ENCODE measurements at regions of chr1 and their contacts with region 1.

Region 1: DNA sequence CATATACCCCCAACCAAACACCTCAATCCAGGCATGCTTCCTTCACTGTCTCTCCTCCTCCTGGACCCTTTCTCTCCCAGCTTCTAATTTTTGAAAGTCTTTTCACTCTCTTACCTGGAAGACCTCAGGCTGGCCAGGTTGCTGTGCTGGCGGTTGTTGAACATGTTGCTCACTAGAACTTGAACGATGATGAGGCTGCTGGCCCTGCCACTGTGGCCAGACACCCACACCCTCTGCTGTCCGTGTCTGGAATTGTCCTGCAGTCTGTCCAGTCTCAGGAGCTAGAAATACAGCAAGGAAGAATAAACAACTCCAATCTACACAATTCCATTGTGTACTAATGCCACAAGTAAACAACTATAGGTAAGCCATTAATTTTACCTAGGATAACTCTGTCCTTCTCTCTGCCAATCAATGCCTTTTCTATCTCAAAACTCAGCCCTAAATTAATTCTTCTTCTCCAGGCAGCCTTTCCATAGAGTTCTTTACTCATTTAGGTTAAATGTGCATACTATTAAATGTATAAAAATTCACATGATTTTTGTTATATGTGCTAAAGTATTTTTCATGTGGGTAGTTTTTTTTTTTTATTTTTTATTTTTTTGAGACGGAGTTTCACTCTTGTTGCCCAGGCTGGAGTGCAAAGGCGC is 5.1 kb upstream of the CTSK start:
- DNase-seq: peak; percentile 81
- H3K4me3 Mint-ChIP-seq: no peak overlapping the region
- H3K27ac Mint-ChIP-seq: no peak overlapping the region
- H3K4me1 Mint-ChIP-seq: no peaks in the 10 kb centered on the region
- H3K27me3 Mint-ChIP-seq: no peaks in the 10 kb centered on the region
- CTCF ChIP-seq: peak; percentile 85

Region 2: GRCh38 chr1:150464422-150464826 is 348.8 kb before region 1 on chr1:
- CTCF ChIA-PET with region 1: no interaction called
- intact Hi-C with region 1: loop called (anchors 5 kb)
- DNase-seq: peak; percentile 77
- H3K4me3 Mint-ChIP-seq: no peak overlapping the region
- H3K27ac Mint-ChIP-seq: no peak overlapping the region
- H3K4me1 Mint-ChIP-seq: peaks cover 8% of the 10 kb centered on the region
- H3K27me3 Mint-ChIP-seq: no peaks in the 10 kb centered on the region
- CTCF ChIP-seq: peak; percentile 70

Region 3: GRCh38 chr1:150621497-150622302 is 191.5 kb before region 1 on chr1:
- CTCF ChIA-PET with region 1: interaction called, 8 read pairs
- intact Hi-C with region 1: loop called (anchors 5 kb)
- DNase-seq: peak; percentile 48
- H3K4me3 Mint-ChIP-seq: no peak overlapping the region
- H3K27ac Mint-ChIP-seq: peak overlapping the region; percentile 42
- H3K4me1 Mint-ChIP-seq: peaks cover 61% of the 10 kb centered on the region
- H3K27me3 Mint-ChIP-seq: no peaks in the 10 kb centered on the region
- CTCF ChIP-seq: peak; percentile 65

Region 4: GRCh38 chr1:150696590-150697524 is 116.3 kb before region 1 on chr1 and contains the start of gene GOLPH3L:
- CTCF ChIA-PET with region 1: interaction called, 19 read pairs
- intact Hi-C with region 1: no loop called
- DNase-seq: peak; percentile 97
- H3K4me3 Mint-ChIP-seq: peak within 1 kb of the TSS; percentile 74
- H3K27ac Mint-ChIP-seq: peak within 1 kb of the TSS; percentile 63
- H3K4me1 Mint-ChIP-seq: peaks cover 12% of the 10 kb centered on the region
- H3K27me3 Mint-ChIP-seq: no peaks in the 10 kb centered on the region
- CTCF ChIP-seq: no peak
- total RNA-seq, gene GOLPH3L: 64.7 and 71.6 TPM in 2 replicates